Heart left ventricle (tissue), 16 donors: ENCODE measurements at regions of chr10 and their contacts with region 1.

Region 1: DNA sequence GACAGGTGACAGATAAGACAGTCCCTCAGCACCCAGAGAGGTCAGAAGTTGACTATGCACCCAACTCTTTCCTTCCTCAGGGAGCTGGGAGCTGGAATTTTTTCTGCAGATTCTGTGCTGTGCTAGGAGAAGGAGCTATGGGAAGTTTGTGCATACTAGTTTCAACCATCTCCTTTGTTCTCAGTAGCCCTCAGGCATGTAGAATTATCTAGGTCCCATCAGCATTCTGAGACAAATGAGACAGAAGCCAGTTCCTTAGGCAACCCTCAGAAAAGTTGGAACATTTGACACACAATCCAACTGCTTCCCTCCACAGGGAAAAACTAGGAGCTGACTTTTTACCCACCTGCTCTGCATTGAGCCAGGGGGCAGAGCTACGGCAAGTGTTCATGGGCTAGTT is 140.2 kb upstream of the KIAA1217 start:
- DNase-seq: no peak
- ATAC-seq: no peak
- H3K4me3 ChIP-seq: no peak overlapping the region
- H3K27ac ChIP-seq: no peak overlapping the region
- H3K4me1 ChIP-seq: no peaks in the 10 kb centered on the region
- H3K27me3 ChIP-seq: no peaks in the 10 kb centered on the region
- CTCF ChIP-seq: no peak
- POLR2A ChIP-seq: no peak

Region 2: DNA sequence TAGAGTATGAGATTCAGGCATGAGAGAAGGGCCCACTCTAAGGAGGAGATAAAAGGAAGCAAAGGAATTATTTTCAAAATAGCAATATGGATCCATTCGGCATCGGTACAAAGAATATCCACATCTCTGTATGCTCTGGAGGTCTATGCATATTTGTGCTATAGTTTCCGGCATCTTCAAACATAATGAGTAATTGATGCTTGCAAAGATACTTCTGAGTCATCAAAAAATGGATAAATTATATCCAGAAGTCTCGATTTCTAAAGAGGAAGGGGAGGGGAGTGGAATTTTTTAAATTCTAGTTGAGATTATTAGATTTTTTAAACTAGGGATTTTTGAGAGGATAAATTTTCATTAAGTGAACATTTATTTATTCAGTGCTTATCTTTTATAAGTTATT is 67.3 kb after region 1 on chr10:
- intact Hi-C with region 1: loop called in 1 of 10 experiments (anchors 5 kb)
- DNase-seq: no peak
- ATAC-seq: no peak
- H3K4me3 ChIP-seq: no peak overlapping the region
- H3K27ac ChIP-seq: no peak overlapping the region
- H3K4me1 ChIP-seq: no peaks in the 10 kb centered on the region
- H3K27me3 ChIP-seq: no peaks in the 10 kb centered on the region
- CTCF ChIP-seq: no peak
- POLR2A ChIP-seq: no peak